HCT116 (cell line): ENCODE measurements at regions of chr15 and their contacts with region 1.

Region 1: DNA sequence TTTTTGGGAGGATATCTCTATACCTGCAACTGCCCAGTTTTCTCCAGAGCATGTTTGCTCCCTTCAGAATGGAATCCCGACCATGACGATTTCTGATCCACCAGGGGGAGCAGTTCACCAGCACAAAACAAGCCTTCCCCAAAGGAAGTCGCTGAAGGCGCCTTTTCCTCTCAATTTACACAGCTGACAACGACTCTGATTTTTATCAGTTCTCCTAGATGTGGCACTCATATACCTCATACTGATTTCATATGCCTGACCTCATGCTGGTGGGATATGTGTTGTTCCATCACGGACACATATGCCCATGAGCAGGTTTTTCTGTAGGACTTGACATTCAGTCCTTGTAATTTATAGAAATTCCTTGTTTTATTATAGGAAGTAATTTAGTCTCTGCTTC is 1028.2 kb downstream of the MCTP2 start:
- DNase-seq: peak; percentile 69
- ATAC-seq: peak; percentile 94
- H3K4me3 ChIP-seq: no peak overlapping the region
- H3K27ac ChIP-seq: no peak overlapping the region
- H3K4me1 ChIP-seq: peaks cover 0 to 2% of the 10 kb centered on the region in 2 experiments; a peak in 1 of 4 replicates
- H3K27me3 ChIP-seq: no peaks in the 10 kb centered on the region
- CTCF ChIP-seq: peak; percentile 53 to 77 (median 72); a peak in 5 of 6 replicates
- POLR2A ChIP-seq: no peak
- RAD21 ChIP-seq: peak; percentile 89

Region 2: GRCh38 chr15:95025924-95026728 is 233.4 kb before region 1 on chr15:
- CTCF ChIA-PET with region 1: no interaction called
- POLR2A ChIA-PET with region 1: no interaction called
- RAD21 ChIA-PET with region 1: no interaction called
- intact Hi-C with region 1: loop called (anchors 10 kb)
- DNase-seq: peak; percentile 13
- ATAC-seq: peak; percentile 78
- H3K4me3 ChIP-seq: no peak overlapping the region
- H3K27ac ChIP-seq: no peak overlapping the region
- H3K4me1 ChIP-seq: no peaks in the 10 kb centered on the region
- H3K27me3 ChIP-seq: no peaks in the 10 kb centered on the region
- CTCF ChIP-seq: peak; percentile 13 to 61 (median 55); a peak in 4 of 6 replicates
- POLR2A ChIP-seq: no peak
- RAD21 ChIP-seq: peak; percentile 62

Region 3: GRCh38 chr15:95557226-95558046 is 297.9 kb after region 1 on chr15:
- CTCF ChIA-PET with region 1: no interaction called
- POLR2A ChIA-PET with region 1: no interaction called
- RAD21 ChIA-PET with region 1: no interaction called
- intact Hi-C with region 1: loop called (anchors 5 kb)
- DNase-seq: peak; percentile 83
- ATAC-seq: peak; percentile 86
- H3K4me3 ChIP-seq: peak overlapping the region in 1 of 2 experiments; percentile 41; a peak in 2 of 4 replicates
- H3K27ac ChIP-seq: peak overlapping the region; percentile 30
- H3K4me1 ChIP-seq: peaks cover 29 to 41% of the 10 kb centered on the region in 2 experiments
- H3K27me3 ChIP-seq: no peaks in the 10 kb centered on the region
- CTCF ChIP-seq: no peak
- POLR2A ChIP-seq: no peak
- RAD21 ChIP-seq: peak; percentile 15; the same call in 1 of the 2 replicates

Region 4: DNA sequence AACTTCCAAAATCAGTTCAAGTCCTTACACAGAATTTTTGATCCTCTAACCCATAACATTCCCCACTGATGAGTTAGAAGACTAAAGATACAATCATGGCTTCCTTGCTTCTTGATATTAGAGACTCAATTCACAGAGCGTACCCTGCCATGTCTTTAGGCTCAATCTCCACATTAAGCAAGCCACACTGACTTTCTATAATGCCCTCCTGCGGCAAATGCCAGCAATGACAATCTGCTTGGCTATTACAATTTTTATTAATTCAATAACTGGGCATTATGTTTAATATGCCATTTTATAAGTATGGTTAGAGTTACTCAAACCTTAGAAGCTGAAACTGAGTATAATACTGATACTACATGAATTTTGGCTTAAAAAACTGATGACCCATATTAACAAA is 591.3 kb after region 1 on chr15:
- CTCF ChIA-PET with region 1: no interaction called
- POLR2A ChIA-PET with region 1: no interaction called
- RAD21 ChIA-PET with region 1: no interaction called
- intact Hi-C with region 1: loop called (anchors 2 kb)
- DNase-seq: peak; percentile 6
- ATAC-seq: peak; percentile 59; the same call in 1 of the 2 replicates
- H3K4me3 ChIP-seq: no peak overlapping the region
- H3K27ac ChIP-seq: no peak overlapping the region
- H3K4me1 ChIP-seq: no peaks in the 10 kb centered on the region
- H3K27me3 ChIP-seq: no peaks in the 10 kb centered on the region
- CTCF ChIP-seq: peak in 2 of 3 experiments; percentile 28 to 54; a peak in 3 of 6 replicates
- POLR2A ChIP-seq: no peak
- RAD21 ChIP-seq: peak; percentile 50; the same call in 1 of the 2 replicates

Region 5: GRCh38 chr15:96585484-96586386 is 1326.2 kb after region 1 on chr15:
- CTCF ChIA-PET with region 1: no interaction called
- POLR2A ChIA-PET with region 1: no interaction called
- RAD21 ChIA-PET with region 1: no interaction called
- intact Hi-C with region 1: loop called (anchors 10 kb)
- DNase-seq: no peak
- ATAC-seq: no peak; the same call in 1 of the 2 replicates
- H3K4me3 ChIP-seq: no peak overlapping the region
- H3K27ac ChIP-seq: no peak overlapping the region
- H3K4me1 ChIP-seq: no peaks in the 10 kb centered on the region
- H3K27me3 ChIP-seq: peaks cover 71% of the 10 kb centered on the region
- CTCF ChIP-seq: peak; percentile 33 to 48 (median 35); a peak in 4 of 6 replicates
- POLR2A ChIP-seq: no peak
- RAD21 ChIP-seq: peak; percentile 55

Region 6: DNA sequence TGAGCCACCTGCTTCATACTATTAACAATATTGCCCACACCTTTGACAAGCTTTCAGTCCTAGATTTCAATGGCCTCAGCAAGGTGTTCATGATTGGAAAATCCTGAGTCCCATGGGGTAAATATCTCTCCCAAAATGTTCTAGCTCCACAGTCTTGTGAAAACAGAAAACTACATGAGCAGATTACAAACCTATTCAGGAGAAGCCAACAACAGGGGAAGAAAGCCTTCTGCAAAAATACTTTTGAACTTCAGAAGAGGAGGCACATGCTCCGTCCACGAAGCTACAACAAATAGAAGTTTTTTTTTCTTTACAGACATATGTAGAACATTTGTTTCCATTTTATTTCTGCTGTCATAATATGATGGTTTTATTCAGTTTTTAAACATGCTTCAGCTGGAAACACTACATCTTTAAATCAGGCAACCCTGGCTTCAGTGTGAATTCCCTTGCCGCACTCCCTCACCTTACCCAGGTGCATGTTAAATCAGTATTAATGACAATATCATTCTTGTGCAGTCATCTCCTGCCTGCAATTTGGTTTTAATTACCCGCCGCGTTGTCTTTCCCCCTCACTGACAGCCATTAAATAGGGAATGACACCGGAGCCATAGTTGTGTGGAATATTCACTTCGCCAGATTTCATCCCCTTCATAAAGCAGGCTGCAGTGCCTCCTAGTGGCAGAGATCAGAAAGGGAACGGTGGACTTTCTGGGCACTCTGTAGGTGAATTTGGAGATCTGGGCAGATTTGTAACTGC is 1975.5 kb after region 1 on chr15:
- CTCF ChIA-PET with region 1: no interaction called
- POLR2A ChIA-PET with region 1: no interaction called
- RAD21 ChIA-PET with region 1: no interaction called
- intact Hi-C with region 1: loop called (anchors 2 kb)
- DNase-seq: peak; percentile 15
- ATAC-seq: peak; percentile 79
- H3K4me3 ChIP-seq: no peak overlapping the region
- H3K27ac ChIP-seq: no peak overlapping the region
- H3K4me1 ChIP-seq: no peaks in the 10 kb centered on the region
- H3K27me3 ChIP-seq: no peaks in the 10 kb centered on the region
- CTCF ChIP-seq: peak; percentile 30 to 78 (median 72); a peak in 5 of 6 replicates
- POLR2A ChIP-seq: no peak
- RAD21 ChIP-seq: peak; percentile 73